ENCODE measurements at regions of chr2 and their contacts with region 1.

Region 1: DNA sequence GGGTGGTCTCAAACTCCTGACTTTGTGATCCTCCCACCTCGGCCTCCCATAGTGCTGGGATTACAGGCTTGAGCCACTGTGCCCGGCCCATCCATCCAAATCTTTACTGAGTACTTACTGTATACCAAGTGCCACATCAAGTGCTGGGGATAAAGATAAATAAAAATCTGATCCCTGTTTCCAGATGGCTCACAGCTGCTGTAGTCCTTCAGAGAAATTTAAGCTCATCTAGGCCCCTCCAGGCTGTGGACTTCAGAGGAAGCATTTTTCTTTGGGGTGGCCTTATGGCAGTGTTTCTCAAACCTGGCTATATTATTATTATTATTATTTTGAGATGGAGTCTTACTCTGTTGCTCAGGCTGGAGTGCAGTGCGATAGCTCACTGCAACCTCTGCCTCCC is 33.7 kb upstream of the GTF2A1L start:
- DNase-seq: no peak
- H3K4me3 ChIP-seq: no peak overlapping the region
- H3K27me3 ChIP-seq: no peaks in the 10 kb centered on the region
- CTCF ChIP-seq: no peak

Region 2: GRCh38 chr2:50143822-50144575 is 1560.0 kb after region 1 on chr2:
- CTCF ChIA-PET with region 1: no interaction called
- POLR2A ChIA-PET with region 1: interaction called, 16 read pairs
- DNase-seq: peak; percentile 5
- H3K4me3 ChIP-seq: peak overlapping the region; percentile 33
- H3K27me3 ChIP-seq: no peaks in the 10 kb centered on the region
- CTCF ChIP-seq: peak; percentile 68

Measured in BJ (cell line).